Motor neuron (in vitro differentiated cells): ENCODE measurements at regions of chr16 and their contacts with region 1.

Region 1: DNA sequence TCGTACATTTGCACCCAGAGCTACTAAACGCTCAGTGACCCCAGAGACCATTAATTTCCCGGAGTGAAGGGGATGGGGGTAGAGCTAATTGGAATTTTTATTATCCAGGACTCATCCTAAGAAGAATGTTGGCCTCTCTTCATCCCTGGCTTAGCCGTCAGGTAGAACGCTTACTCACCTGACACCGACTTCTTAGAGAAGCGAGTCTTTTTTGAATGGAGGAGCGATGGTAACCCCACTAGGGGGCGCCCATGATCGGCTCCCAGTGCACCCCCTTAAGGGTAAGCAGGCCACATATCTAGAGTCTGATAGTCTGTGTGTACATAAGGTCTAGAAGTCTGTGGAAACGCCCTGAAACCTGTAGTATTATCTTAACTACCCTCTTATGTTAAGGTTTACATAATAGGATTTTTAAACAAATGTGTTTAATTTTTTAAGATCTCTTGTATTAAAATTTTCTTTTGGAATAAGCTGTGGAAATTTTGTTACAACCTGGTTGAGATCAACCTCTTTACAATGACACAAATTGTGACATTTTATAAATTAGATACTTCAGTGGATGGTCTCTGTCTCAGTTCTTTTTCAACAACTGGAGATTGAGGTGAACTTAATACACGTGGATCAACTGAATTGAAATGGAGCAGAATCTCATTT is 229.8 kb downstream of the CPPED1 start:
- ATAC-seq: peak in 3 of 8 experiments; percentile 22 to 72 (median 58)
- H3K4me3 ChIP-seq: no peak overlapping the region
- H3K27ac ChIP-seq: no peak overlapping the region
- H3K4me1 ChIP-seq: no peaks in the 10 kb centered on the region

Region 2: GRCh38 chr16:12803203-12804097 is 229.6 kb after region 1 on chr16 and contains the start of gene CPPED1:
- in situ Hi-C with region 1: loop called in 1 of 9 experiments (anchors 25 kb)
- ATAC-seq: peak; percentile 92 to 95 (median 94)
- H3K4me3 ChIP-seq: peak within 1 kb of the TSS; percentile 66 to 89 (median 80)
- H3K27ac ChIP-seq: peak within 1 kb of the TSS; percentile 87
- H3K4me1 ChIP-seq: peaks cover 5 to 7% of the 10 kb centered on the region in 2 donors
- total RNA-seq, gene CPPED1: 1.1 to 20.1 (median 4.6) TPM